CD8-positive, alpha-beta memory T cell (primary cell): ENCODE measurements at regions of chr13 and their contacts with region 1.

Region 1: GRCh38 chr13:95378603-95379002 is 77.4 kb upstream of the ABCC4 start:
- DNase-seq: no peak
- H3K4me3 ChIP-seq: no peak overlapping the region
- H3K4me3 Mint-ChIP-seq: no peak overlapping the region
- H3K27ac ChIP-seq: no peak overlapping the region
- H3K27ac Mint-ChIP-seq: no peak overlapping the region
- H3K4me1 ChIP-seq: no peaks in the 10 kb centered on the region
- H3K4me1 Mint-ChIP-seq: peaks cover 4 to 5% (median 5%) of the 10 kb centered on the region in 3 donors
- H3K27me3 ChIP-seq: no peaks in the 10 kb centered on the region
- H3K27me3 Mint-ChIP-seq: peaks cover 10 to 20% of the 10 kb centered on the region in 2 donors

Region 2: GRCh38 chr13:95301183-95301967 is 77.2 kb before region 1 on chr13 and contains the start of gene ABCC4:
- CTCF ChIA-PET with region 1: interaction called, 18 read pairs
- POLR2A ChIA-PET with region 1: no interaction called
- DNase-seq: peak; percentile 12 to 59 (median 48)
- H3K4me3 ChIP-seq: peak within 1 kb of the TSS; percentile 85
- H3K4me3 Mint-ChIP-seq: peak within 1 kb of the TSS; percentile 89 to 96 (median 90)
- H3K27ac ChIP-seq: peak within 1 kb of the TSS; percentile 25
- H3K27ac Mint-ChIP-seq: peak within 1 kb of the TSS in 7 of 8 donors; percentile 41 to 90 (median 78)
- H3K4me1 ChIP-seq: peaks cover 13% of the 10 kb centered on the region
- H3K4me1 Mint-ChIP-seq: peaks cover 23 to 34% (median 33%) of the 10 kb centered on the region in 3 donors
- H3K27me3 ChIP-seq: no peaks in the 10 kb centered on the region
- H3K27me3 Mint-ChIP-seq: peaks cover 0 to 5% of the 10 kb centered on the region in 2 donors
- total RNA-seq, gene ABCC4: 11.2 to 12.5 TPM

Region 3: DNA sequence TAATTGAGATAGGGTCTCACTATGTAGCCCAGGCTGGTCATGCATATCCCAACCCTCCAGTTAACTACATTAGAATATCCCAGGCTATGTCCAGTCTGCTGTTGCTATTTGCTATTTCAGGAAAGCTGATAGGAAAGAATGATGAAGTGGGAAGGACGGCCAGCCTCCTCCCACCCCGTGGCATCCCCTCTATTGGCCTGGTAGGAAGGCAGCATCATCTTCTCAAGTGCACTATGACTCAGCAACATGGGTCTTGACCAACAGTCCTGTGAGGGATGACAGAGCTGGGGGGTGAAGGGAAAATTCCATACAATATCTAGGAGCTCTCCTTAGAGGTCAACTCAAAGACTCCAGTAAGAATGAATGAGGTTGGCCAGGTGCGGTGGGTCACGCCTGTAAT is 29.3 kb before region 1 on chr13:
- CTCF ChIA-PET with region 1: no interaction called
- POLR2A ChIA-PET with region 1: no interaction called
- DNase-seq: no peak
- H3K4me3 ChIP-seq: no peak overlapping the region
- H3K4me3 Mint-ChIP-seq: no peak overlapping the region
- H3K27ac ChIP-seq: no peak overlapping the region
- H3K27ac Mint-ChIP-seq: no peak overlapping the region
- H3K4me1 ChIP-seq: no peaks in the 10 kb centered on the region
- H3K4me1 Mint-ChIP-seq: no peaks in the 10 kb centered on the region
- H3K27me3 ChIP-seq: no peaks in the 10 kb centered on the region
- H3K27me3 Mint-ChIP-seq: peaks cover 21 to 22% of the 10 kb centered on the region in 2 donors

Region 4: GRCh38 chr13:95564733-95565291 is 186.2 kb after region 1 on chr13:
- CTCF ChIA-PET with region 1: no interaction called
- POLR2A ChIA-PET with region 1: no interaction called
- DNase-seq: no peak
- H3K4me3 ChIP-seq: no peak overlapping the region
- H3K4me3 Mint-ChIP-seq: no peak overlapping the region
- H3K27ac ChIP-seq: no peak overlapping the region
- H3K27ac Mint-ChIP-seq: no peak overlapping the region
- H3K4me1 ChIP-seq: no peaks in the 10 kb centered on the region
- H3K4me1 Mint-ChIP-seq: peaks cover 0 to 2% (median 0%) of the 10 kb centered on the region in 3 donors
- H3K27me3 ChIP-seq: no peaks in the 10 kb centered on the region
- H3K27me3 Mint-ChIP-seq: peaks cover 0 to 27% of the 10 kb centered on the region in 2 donors